Activated T-helper 2 cell treated with anti-CD3 and anti-CD28 coated beads, Interferon-gamma antibody, Interleukin-2, Interleukin-4, amounts not matched to agents 10 μg/mL and 5 μg/mL and 100 μg/mL, durations not matched to agents 14 hours and 24 hours and 36 hours (primary cell): ENCODE measurements at regions of chr2 and their contacts with region 1.

Region 1: DNA sequence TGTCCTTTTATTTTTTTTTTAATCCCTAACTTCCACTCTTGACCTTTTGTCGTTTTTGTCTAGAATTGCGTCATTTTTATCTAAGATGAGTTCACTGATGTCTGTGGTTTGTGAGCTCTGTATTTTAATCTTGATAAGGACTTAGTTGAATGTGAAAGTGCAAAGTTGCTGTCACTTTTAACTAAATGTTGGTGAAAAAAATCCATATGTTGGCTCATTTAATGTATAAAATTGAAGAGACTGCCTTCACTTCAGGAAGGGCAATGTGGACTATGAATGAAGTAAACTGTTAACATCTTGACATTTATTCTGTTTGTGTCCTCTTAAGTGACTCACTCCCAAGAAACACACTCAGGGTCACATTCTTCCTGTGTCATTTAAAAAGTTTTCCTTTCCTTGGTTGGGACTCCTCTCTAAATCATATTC is 256.6 kb upstream of the RASGRP3 start:
- DNase-seq: no peak
- H3K4me3 Mint-ChIP-seq: no peak overlapping the region
- H3K27ac Mint-ChIP-seq: peak overlapping the region; percentile 41
- H3K4me1 Mint-ChIP-seq: peaks cover 20% of the 10 kb centered on the region
- H3K27me3 Mint-ChIP-seq: peaks cover 7% of the 10 kb centered on the region

Region 2: DNA sequence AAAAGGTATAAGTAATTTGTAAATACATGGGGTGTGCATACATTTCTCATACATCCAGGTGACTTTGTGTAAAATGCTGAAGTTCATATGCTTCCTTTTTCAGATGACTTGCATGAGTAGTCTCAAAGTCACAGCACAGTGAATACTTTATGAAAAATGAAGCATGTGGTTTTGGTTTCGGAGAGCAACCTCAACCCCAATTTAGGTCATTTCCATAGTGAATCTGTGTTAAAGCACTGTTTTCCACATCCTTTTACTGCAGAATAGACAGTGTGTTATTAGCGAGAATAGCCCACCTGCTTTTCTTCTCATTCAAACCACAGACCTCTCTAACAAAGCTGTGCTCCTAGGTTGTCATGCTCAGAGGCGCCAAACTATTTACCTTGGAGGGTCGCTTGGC is 52.1 kb after region 1 on chr2:
- intact Hi-C with region 1: loop called (anchors 5 kb)
- DNase-seq: no peak
- H3K4me3 Mint-ChIP-seq: no peak overlapping the region
- H3K27ac Mint-ChIP-seq: no peak overlapping the region
- H3K4me1 Mint-ChIP-seq: peaks cover 14% of the 10 kb centered on the region
- H3K27me3 Mint-ChIP-seq: peaks cover 39% of the 10 kb centered on the region

Region 3: GRCh38 chr2:33312355-33312754 is 92.5 kb after region 1 on chr2:
- intact Hi-C with region 1: loop called (anchors 2 kb)
- DNase-seq: no peak
- H3K4me3 Mint-ChIP-seq: no peak overlapping the region
- H3K27ac Mint-ChIP-seq: no peak overlapping the region
- H3K4me1 Mint-ChIP-seq: peaks cover 15% of the 10 kb centered on the region
- H3K27me3 Mint-ChIP-seq: peaks cover 12% of the 10 kb centered on the region

Region 4: DNA sequence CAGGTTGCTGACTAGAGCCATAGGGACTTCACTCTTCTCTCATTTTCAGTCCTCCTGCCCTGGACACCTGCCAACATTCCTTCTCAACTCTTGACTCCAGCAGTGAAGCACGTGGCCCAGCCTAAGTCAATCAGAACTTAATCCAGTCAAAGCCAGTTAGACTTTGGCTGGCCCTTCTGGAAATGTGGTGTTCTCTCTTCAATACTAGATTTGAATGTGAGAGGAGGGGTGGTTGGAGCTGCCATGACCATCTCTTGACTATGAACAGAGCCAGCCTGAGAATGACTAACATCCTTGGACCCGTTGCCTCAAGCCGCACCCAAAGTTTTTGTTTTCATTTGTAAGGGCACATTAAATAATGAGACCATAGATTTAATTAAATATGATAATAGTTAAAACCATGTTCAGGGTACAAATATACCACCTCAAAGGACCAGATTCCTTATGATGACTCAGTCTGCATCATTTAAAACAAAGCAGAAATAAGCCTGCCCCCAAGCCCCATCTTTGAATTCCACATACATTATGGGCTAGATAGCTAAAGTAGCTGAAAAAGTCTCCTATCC is 206.9 kb after region 1 on chr2:
- intact Hi-C with region 1: no loop called
- DNase-seq: no peak
- H3K4me3 Mint-ChIP-seq: no peak overlapping the region
- H3K27ac Mint-ChIP-seq: no peak overlapping the region
- H3K4me1 Mint-ChIP-seq: no peaks in the 10 kb centered on the region
- H3K27me3 Mint-ChIP-seq: peaks cover 2% of the 10 kb centered on the region

Region 5: DNA sequence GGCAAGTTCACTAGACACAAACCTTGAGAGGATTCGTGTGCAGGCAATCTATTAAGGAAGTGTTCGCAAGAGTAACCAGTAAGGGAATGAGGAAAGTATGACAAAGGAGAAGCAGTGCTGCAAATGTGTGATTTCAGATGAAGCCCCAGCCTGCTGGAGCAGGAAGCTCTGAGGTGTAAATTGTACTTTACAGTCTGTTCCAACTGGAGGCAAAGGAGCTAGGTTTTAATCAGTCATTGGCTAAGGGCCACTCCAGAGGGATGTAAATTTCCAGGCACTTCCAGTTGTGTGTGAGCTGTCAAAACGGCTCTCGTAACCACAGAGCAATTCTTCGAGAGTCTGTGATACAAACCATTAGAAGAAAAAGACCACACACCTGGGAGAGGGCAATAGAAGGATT is 738.7 kb after region 1 on chr2:
- intact Hi-C with region 1: no loop called
- DNase-seq: no peak
- H3K4me3 Mint-ChIP-seq: no peak overlapping the region
- H3K27ac Mint-ChIP-seq: no peak overlapping the region
- H3K4me1 Mint-ChIP-seq: no peaks in the 10 kb centered on the region
- H3K27me3 Mint-ChIP-seq: no peaks in the 10 kb centered on the region